WTC11 (cell line): ENCODE measurements at regions of chr19 and their contacts with region 1.

Region 1: GRCh38 chr19:51338563-51339312 is 3.2 kb downstream of the VSIG10L start:
- DNase-seq: peak; percentile 91
- ATAC-seq: peak; percentile 50
- H3K4me3 Mint-ChIP-seq: peak overlapping the region; percentile 89
- H3K27ac Mint-ChIP-seq: peak overlapping the region; percentile 98
- H3K4me1 Mint-ChIP-seq: peaks cover 32% of the 10 kb centered on the region
- H3K27me3 Mint-ChIP-seq: peaks cover 26% of the 10 kb centered on the region
- CTCF ChIP-seq: peak; percentile 69

Region 2: GRCh38 chr19:51111425-51112005 is 227.2 kb before region 1 on chr19:
- CTCF ChIA-PET with region 1: no interaction called
- POLR2A ChIA-PET with region 1: no interaction called
- DNase-seq: no peak
- ATAC-seq: no peak
- H3K4me3 Mint-ChIP-seq: no peak overlapping the region
- H3K27ac Mint-ChIP-seq: no peak overlapping the region
- H3K4me1 Mint-ChIP-seq: peaks cover 8% of the 10 kb centered on the region
- H3K27me3 Mint-ChIP-seq: peaks cover 31% of the 10 kb centered on the region
- CTCF ChIP-seq: no peak

Region 3: GRCh38 chr19:51158474-51159129 is 180.1 kb before region 1 on chr19:
- CTCF ChIA-PET with region 1: interaction called, 15 read pairs
- POLR2A ChIA-PET with region 1: no interaction called
- DNase-seq: peak; percentile 93
- ATAC-seq: peak; percentile 92
- H3K4me3 Mint-ChIP-seq: no peak overlapping the region
- H3K27ac Mint-ChIP-seq: no peak overlapping the region; the same call in 1 of the 2 replicates
- H3K4me1 Mint-ChIP-seq: peaks cover 11% of the 10 kb centered on the region
- H3K27me3 Mint-ChIP-seq: peaks cover 6% of the 10 kb centered on the region
- CTCF ChIP-seq: peak; percentile 96

Region 4: GRCh38 chr19:51277112-51277511 is 61.6 kb before region 1 on chr19:
- CTCF ChIA-PET with region 1: no interaction called
- POLR2A ChIA-PET with region 1: no interaction called
- DNase-seq: no peak
- ATAC-seq: no peak
- H3K4me3 Mint-ChIP-seq: no peak overlapping the region
- H3K27ac Mint-ChIP-seq: no peak overlapping the region
- H3K4me1 Mint-ChIP-seq: peaks cover 4% of the 10 kb centered on the region
- H3K27me3 Mint-ChIP-seq: peaks cover 42% of the 10 kb centered on the region
- CTCF ChIP-seq: no peak

Region 5: DNA sequence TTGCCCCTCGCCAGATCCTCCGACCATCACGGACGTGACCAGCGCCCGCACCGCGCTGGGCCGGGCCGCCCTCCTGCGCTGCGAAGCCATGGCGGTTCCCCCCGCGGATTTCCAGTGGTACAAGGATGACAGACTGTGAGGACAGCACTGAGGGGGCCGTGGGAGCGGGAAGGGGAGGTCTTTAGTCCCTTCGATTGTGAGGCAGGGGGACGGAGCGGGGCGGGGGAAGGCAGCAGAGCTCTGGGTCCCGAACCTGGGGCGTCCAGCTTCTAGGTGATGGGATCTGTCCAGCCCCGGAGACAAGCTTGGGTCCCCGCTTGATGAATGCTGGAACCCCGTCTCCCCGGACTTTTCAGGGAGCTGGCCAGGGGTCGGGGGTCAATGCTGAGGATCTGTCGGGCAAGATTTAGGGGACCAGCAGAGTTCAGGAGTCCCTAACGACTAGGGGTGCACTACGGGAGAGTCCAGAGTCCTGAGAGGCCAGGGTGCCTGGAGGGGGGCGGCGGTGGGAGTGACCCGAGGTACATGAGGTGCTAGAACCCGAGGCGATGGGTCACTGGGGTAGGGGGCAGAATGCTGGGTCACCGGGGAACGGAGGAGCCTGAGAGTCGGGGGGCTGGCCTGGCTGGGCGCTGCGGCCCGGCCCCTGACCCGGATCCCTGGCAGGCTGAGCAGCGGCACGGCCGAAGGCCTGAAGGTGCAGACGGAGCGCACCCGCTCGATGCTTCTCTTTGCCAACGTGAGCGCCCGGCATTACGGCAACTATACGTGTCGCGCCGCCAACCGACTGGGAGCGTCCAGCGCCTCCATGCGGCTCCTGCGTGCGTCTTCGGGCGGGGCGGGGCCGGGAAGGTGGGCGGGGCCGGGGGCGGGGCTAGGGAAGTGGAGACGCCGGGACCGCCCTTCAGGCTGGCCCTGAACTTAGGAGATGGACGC is 11.4 kb before region 1 on chr19:
- CTCF ChIA-PET with region 1: interaction called, 21 read pairs
- POLR2A ChIA-PET with region 1: no interaction called
- DNase-seq: peak; percentile 79
- ATAC-seq: peak; percentile 83
- H3K4me3 Mint-ChIP-seq: peak overlapping the region; percentile 70
- H3K27ac Mint-ChIP-seq: peak overlapping the region; percentile 94; the same call in 1 of the 2 replicates
- H3K4me1 Mint-ChIP-seq: peaks cover 8% of the 10 kb centered on the region
- H3K27me3 Mint-ChIP-seq: peaks cover 26% of the 10 kb centered on the region
- CTCF ChIP-seq: no peak

Region 6: GRCh38 chr19:51367565-51368365 is 29.0 kb after region 1 on chr19:
- CTCF ChIA-PET with region 1: interaction called, 13 read pairs
- POLR2A ChIA-PET with region 1: interaction called, 6 read pairs
- DNase-seq: peak; percentile 100
- ATAC-seq: peak; percentile 88
- H3K4me3 Mint-ChIP-seq: peak overlapping the region; percentile 99
- H3K27ac Mint-ChIP-seq: no peak overlapping the region
- H3K4me1 Mint-ChIP-seq: peaks cover 30% of the 10 kb centered on the region
- H3K27me3 Mint-ChIP-seq: peaks cover 21% of the 10 kb centered on the region
- CTCF ChIP-seq: no peak

Region 7: GRCh38 chr19:51407511-51408131 is 68.9 kb after region 1 on chr19:
- CTCF ChIA-PET with region 1: interaction called, 15 read pairs
- POLR2A ChIA-PET with region 1: interaction called, 3 read pairs
- DNase-seq: peak; percentile 47
- ATAC-seq: peak; percentile 87
- H3K4me3 Mint-ChIP-seq: no peak overlapping the region
- H3K27ac Mint-ChIP-seq: peak overlapping the region; percentile 85
- H3K4me1 Mint-ChIP-seq: peaks cover 32% of the 10 kb centered on the region
- H3K27me3 Mint-ChIP-seq: peaks cover 8% of the 10 kb centered on the region
- CTCF ChIP-seq: 0 out of 2 replicates have a peak, but pooled peaks have one; percentile 27

Region 8: DNA sequence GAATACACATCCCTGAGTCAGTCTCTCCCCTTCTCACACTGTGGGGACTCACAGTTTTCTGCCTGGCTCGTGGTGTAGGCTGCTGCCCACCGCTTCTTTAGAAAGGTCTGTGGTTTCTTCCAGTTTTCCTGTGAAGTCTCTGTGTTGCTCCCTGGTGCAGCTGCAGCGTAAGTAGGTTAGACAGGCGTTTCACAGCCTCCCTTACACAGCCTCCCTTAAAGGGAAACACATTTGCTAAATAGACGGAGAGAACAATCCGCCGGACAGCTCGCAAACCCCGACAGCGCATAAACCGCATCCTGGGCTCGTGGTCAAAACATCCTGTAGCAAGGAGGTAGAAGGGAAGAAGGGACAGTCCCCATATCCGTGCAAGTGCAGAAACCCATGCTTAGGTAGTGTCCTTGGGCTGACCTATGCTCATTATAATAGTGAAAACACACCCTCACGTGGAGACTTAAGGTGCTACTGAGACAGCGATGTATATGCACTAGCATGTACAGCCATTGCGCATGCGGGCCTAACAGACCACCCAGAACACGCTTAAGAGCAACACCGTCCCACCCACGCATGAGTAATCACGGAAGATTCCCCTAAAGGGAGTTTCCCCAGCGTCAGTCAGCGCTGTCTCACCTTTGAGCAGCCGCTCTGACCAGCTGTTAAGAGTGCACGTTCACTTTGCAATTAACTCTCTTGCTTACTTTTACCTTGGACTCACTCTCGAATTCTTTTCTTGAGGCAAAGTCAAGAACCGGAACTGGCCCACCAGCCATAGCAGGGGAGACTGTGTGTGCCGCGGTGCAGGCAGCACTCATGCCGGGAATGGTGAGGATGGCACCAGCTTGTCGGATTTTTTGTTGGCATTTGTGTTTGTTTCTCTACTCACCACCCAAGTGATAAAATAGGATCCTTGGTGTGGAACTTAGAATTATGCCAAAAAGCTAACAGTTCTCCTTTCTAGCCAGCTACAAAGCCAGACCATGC is 103.0 kb after region 1 on chr19:
- CTCF ChIA-PET with region 1: interaction called, 23 read pairs
- POLR2A ChIA-PET with region 1: no interaction called
- DNase-seq: no peak
- ATAC-seq: no peak
- H3K4me3 Mint-ChIP-seq: no peak overlapping the region
- H3K27ac Mint-ChIP-seq: no peak overlapping the region
- H3K4me1 Mint-ChIP-seq: peaks cover 6% of the 10 kb centered on the region; the same call in 1 of the 2 replicates
- H3K27me3 Mint-ChIP-seq: peaks cover 39% of the 10 kb centered on the region
- CTCF ChIP-seq: no peak